ENCODE measurements at regions of chr6 and their contacts with region 1.

Region 1: GRCh38 chr6:53348371-53349208 is at the start of gene ELOVL5:
- DNase-seq: peak; percentile 93 to 95
- H3K4me3 ChIP-seq: peak within 1 kb of the TSS; percentile 91
- H3K4me3 Mint-ChIP-seq: peak within 1 kb of the TSS; percentile 83
- H3K27ac Mint-ChIP-seq: peak within 1 kb of the TSS; percentile 86
- H3K4me1 ChIP-seq: no peaks in the 10 kb centered on the region
- H3K4me1 Mint-ChIP-seq: peaks cover 5% of the 10 kb centered on the region
- H3K27me3 ChIP-seq: no peaks in the 10 kb centered on the region
- H3K27me3 Mint-ChIP-seq: no peaks in the 10 kb centered on the region
- CTCF ChIP-seq: no peak
- total RNA-seq, gene ELOVL5: 70.4 and 75.6 TPM in 2 replicates

Region 2: DNA sequence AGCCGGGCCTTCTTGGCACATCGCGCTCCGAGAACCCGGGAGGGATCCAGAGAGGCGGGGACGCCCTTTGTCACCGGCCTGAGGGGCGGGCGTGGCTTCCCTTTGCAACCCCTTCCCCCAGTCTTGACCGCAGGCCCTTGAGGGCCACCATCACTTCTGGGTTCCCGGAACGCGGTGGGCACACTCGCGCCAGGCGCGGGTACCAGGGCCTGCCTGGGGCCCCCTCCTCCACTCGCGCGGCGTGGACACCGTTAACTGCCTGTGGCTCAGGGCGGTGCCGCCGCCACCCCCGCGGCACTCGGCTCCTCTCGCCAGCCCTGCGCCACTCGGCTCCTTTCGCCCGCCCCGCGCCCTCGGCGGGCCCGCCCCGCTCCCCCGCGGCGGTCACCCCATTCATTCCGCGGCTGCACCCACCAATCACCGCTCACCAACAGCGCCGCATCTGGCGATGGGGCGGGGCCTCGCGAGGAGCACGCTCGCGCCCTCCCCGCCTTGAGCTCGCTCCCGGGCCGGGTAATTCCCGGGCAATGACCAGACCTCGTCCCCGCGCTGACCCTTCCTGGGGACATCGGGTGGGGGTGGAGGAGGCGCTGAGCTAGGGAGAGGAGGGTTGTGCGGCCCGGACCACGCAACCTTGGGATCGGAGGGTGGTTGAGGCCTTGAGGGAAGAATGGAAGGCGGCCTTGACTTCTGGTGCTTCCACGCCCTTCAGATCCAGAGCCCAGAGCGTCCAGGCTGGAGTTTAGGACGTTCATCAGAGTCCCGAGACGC is 10.7 kb after region 1 on chr6:
- CTCF ChIA-PET with region 1: interaction called, 5 read pairs
- POLR2A ChIA-PET with region 1: interaction called, 5 read pairs
- intact Hi-C with region 1: loop called (anchors 1 kb)
- DNase-seq: peak; percentile 94 to 97
- H3K4me3 ChIP-seq: peak overlapping the region; percentile 59
- H3K4me3 Mint-ChIP-seq: peak overlapping the region; percentile 78
- H3K27ac Mint-ChIP-seq: peak overlapping the region; percentile 84
- H3K4me1 ChIP-seq: peaks cover 16% of the 10 kb centered on the region
- H3K4me1 Mint-ChIP-seq: peaks cover 15% of the 10 kb centered on the region
- H3K27me3 ChIP-seq: no peaks in the 10 kb centered on the region
- H3K27me3 Mint-ChIP-seq: peaks cover 3% of the 10 kb centered on the region
- CTCF ChIP-seq: no peak

Region 3: GRCh38 chr6:53369876-53370515 is 21.4 kb after region 1 on chr6:
- CTCF ChIA-PET with region 1: no interaction called
- POLR2A ChIA-PET with region 1: no interaction called
- intact Hi-C with region 1: no loop called
- DNase-seq: peak in 1 of 2 experiments; percentile 25
- H3K4me3 ChIP-seq: no peak overlapping the region
- H3K4me3 Mint-ChIP-seq: peak overlapping the region; percentile 6
- H3K27ac Mint-ChIP-seq: no peak overlapping the region
- H3K4me1 ChIP-seq: peaks cover 11% of the 10 kb centered on the region
- H3K4me1 Mint-ChIP-seq: peaks cover 13% of the 10 kb centered on the region
- H3K27me3 ChIP-seq: no peaks in the 10 kb centered on the region; the same call in 1 of the 2 replicates
- H3K27me3 Mint-ChIP-seq: peaks cover 6% of the 10 kb centered on the region
- CTCF ChIP-seq: no peak

Measured in Caco-2 (cell line).